B cell (primary cell): ENCODE measurements at regions of chr3 and their contacts with region 1.

Region 1: GRCh38 chr3:48663415-48664312 is 978 bp upstream of the CELSR3 start:
- DNase-seq: peak; percentile 88
- ATAC-seq: peak; percentile 80
- H3K4me3 ChIP-seq: peak overlapping the region in 4 of 5 experiments; percentile 45 to 64 (median 52)
- H3K4me3 Mint-ChIP-seq: peak overlapping the region; percentile 87
- H3K27ac ChIP-seq: peak overlapping the region in 1 of 2 donors; percentile 13
- H3K27ac Mint-ChIP-seq: peak overlapping the region; percentile 71
- H3K4me1 ChIP-seq: peaks cover 28 to 31% of the 10 kb centered on the region in 2 donors
- H3K4me1 Mint-ChIP-seq: peaks cover 23% of the 10 kb centered on the region
- H3K27me3 ChIP-seq: peaks cover 0 to 47% (median 16%) of the 10 kb centered on the region in 4 experiments
- H3K27me3 Mint-ChIP-seq: peaks cover 16% of the 10 kb centered on the region
- CTCF ChIP-seq: peak; percentile 72

Region 2: DNA sequence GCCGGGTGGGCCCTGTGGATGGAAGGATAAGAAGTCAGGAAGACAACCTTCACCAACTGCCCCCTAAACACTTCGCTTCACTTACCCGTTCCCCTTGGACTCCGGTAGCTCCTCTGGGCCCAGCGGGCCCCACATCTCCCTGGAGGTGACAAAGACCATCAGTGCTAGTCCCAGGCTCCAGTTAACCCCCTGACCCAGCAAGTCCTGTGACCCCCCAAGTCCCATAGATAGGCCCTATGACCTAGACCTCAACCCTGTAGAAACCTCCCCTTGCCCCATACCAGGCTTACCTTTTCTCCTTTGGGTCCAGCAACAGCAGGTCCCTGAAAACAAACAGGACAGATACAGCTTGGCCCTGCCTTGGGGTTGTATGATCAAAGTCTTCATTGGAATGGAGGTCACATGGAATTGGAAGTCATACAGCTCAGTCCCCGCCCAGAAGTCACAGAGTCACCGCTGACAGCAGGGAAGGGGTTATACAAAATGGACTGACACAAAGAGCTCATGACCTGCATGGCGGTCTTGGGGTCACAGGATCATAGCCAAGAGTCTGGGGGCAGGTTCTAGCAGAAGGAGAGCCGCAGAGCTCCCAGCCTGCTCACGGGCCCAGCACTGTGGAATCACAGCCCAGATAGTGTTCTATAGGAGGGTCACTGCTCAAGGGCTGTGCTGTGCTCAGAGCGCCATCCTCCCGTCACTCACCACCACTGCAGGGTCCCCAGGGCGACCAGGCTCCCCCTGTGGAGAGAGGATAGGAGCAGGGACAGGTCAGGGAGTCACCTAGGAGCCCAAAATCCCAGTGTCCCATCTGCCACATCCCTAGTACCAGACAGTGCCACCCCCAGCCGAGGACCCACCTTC is 81.8 kb before region 1 on chr3:
- CTCF ChIA-PET with region 1: no interaction called
- POLR2A ChIA-PET with region 1: no interaction called
- intact Hi-C with region 1: no loop called
- DNase-seq: no peak
- ATAC-seq: no peak
- H3K4me3 ChIP-seq: no peak overlapping the region
- H3K4me3 Mint-ChIP-seq: no peak overlapping the region
- H3K27ac ChIP-seq: no peak overlapping the region
- H3K27ac Mint-ChIP-seq: no peak overlapping the region
- H3K4me1 ChIP-seq: no peaks in the 10 kb centered on the region
- H3K4me1 Mint-ChIP-seq: no peaks in the 10 kb centered on the region
- H3K27me3 ChIP-seq: no peaks in the 10 kb centered on the region
- H3K27me3 Mint-ChIP-seq: peaks cover 4% of the 10 kb centered on the region
- CTCF ChIP-seq: no peak

Region 3: DNA sequence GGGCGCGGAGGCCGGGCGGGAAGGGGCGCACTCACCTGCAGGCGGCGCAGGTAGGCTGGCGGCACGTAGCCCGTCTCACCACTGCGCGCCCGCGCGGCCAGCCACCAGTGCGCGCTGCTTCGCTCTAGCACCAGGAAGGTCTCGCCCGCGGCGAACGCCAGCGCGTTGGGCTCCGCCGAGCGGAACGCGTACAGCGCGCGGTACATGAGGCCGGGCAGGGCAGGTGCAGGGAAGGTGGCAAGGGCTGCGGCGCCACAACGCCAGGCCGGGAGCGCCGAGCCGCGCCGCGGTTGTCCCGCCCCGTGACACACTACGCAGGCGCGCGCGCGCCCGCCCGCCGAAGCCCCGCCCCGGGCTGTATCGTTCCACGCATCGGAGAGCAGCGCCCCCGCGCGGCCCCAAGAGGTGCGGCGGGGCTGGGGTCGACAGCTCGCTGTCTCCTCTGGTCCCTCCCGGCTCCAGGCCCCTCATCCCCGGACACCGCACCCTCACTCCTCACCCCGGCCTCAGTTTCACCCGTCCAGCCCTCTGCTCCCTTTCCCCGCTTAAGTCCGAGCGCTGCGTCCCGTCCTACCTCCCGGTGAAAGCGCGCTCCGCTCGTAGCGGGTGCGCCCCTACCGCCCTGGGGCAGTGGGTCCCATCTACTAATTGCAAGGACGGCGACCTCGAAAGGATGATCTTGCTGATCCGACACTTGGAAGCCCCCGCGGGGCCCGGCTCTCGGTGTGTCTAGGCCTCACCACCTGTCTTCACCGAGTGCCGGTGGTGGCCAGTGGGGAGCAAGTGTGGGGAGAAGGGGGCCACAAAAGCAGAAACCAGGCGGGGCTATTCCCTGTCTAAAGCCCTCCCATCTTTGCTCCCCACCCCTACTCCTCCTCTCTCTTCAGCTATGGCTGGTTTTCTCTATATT is 22.2 kb after region 1 on chr3 and contains the start of gene NCKIPSD:
- CTCF ChIA-PET with region 1: interaction called, 5 read pairs
- POLR2A ChIA-PET with region 1: interaction called, 9 read pairs
- intact Hi-C with region 1: loop called (anchors 2 kb)
- DNase-seq: peak; percentile 96
- ATAC-seq: peak; percentile 91
- H3K4me3 ChIP-seq: peak within 1 kb of the TSS in 4 of 5 experiments; percentile 58 to 75 (median 70)
- H3K4me3 Mint-ChIP-seq: peak within 1 kb of the TSS; percentile 89
- H3K27ac ChIP-seq: peak within 1 kb of the TSS; percentile 40 to 68
- H3K27ac Mint-ChIP-seq: peak within 1 kb of the TSS; percentile 92
- H3K4me1 ChIP-seq: peaks cover 10 to 25% of the 10 kb centered on the region in 2 donors
- H3K4me1 Mint-ChIP-seq: peaks cover 22% of the 10 kb centered on the region
- H3K27me3 ChIP-seq: no peaks in the 10 kb centered on the region
- H3K27me3 Mint-ChIP-seq: no peaks in the 10 kb centered on the region
- CTCF ChIP-seq: peak; percentile 91
- total RNA-seq, gene NCKIPSD: 19.1 and 19.7 TPM in 2 replicates